Calu3 (cell line): ENCODE measurements at regions of chr12 and their contacts with region 1.

Region 1: DNA sequence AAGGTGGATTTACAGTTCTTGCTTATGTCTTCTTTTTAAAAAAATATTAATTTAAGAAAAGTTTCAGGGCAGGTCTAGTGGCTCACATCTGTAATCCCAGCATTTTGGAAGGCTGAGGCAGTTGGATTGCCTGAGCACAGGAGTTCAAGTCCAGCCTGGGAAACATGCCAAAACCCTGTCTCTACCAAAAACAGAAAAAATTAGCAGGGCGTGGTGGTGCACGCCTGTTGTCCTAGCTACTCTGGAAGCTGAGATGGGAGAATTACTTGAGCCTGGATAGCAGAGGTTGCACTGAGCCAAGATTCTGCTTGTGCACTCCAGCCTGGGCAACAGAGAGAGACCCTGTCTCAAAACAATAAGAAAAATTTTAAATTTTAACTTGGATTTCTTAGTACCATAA is 5.4 kb upstream of the TAS2R46 start:
- DNase-seq: no peak
- H3K4me3 Mint-ChIP-seq: no peak overlapping the region
- H3K27ac Mint-ChIP-seq: no peak overlapping the region
- H3K4me1 Mint-ChIP-seq: no peaks in the 10 kb centered on the region
- H3K27me3 Mint-ChIP-seq: no peaks in the 10 kb centered on the region
- CTCF ChIP-seq: no peak

Region 2: GRCh38 chr12:11015775-11016430 is 51.6 kb before region 1 on chr12:
- CTCF ChIA-PET with region 1: interaction called, 4 read pairs
- intact Hi-C with region 1: loop called (anchors 1 kb)
- DNase-seq: peak; percentile 7
- H3K4me3 Mint-ChIP-seq: no peak overlapping the region
- H3K27ac Mint-ChIP-seq: peak overlapping the region; percentile 11
- H3K4me1 Mint-ChIP-seq: peaks cover 15% of the 10 kb centered on the region
- H3K27me3 Mint-ChIP-seq: no peaks in the 10 kb centered on the region
- CTCF ChIP-seq: no peak

Region 3: DNA sequence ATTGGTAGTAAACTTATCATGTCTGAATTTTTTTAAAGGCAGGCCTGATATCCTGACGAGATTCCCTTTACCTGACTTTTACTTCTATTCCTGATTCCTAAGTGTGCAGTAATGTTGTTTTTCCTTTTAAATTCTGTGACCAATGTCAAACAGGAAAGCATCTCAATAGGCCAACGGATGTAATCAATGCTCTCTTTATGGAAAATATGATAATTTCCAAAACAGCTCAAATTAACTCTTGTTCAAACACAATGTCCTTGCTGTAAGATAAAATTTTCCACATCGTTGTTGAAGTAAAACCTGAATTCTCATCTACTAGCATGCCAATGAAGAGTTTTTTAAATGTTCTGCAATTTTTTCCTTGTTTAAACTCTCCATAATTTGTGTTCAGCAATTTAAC is 28.3 kb before region 1 on chr12:
- CTCF ChIA-PET with region 1: no interaction called
- intact Hi-C with region 1: loop called (anchors 1 kb)
- DNase-seq: no peak
- H3K4me3 Mint-ChIP-seq: no peak overlapping the region
- H3K27ac Mint-ChIP-seq: no peak overlapping the region
- H3K4me1 Mint-ChIP-seq: no peaks in the 10 kb centered on the region
- H3K27me3 Mint-ChIP-seq: no peaks in the 10 kb centered on the region
- CTCF ChIP-seq: no peak

Region 4: DNA sequence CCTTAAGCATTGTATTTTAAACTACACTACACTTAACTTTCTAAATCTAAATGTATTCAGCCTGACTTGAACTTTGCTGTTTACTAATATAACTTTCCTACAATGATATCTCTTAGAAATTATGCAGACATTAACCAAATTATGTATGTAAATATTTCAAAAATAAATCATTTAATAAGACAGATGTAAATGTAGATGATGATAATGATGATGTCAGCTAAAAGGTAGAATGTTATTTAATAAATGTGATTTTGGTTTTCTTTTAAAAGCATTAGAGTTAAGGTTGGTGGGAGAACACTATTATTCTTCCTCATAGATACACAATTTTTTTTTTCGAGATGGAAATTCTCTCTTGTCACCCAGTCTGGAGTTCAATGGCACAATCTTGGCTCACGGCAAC is 14.5 kb after region 1 on chr12:
- CTCF ChIA-PET with region 1: no interaction called
- intact Hi-C with region 1: no loop called
- DNase-seq: no peak
- H3K4me3 Mint-ChIP-seq: no peak overlapping the region
- H3K27ac Mint-ChIP-seq: no peak overlapping the region
- H3K4me1 Mint-ChIP-seq: no peaks in the 10 kb centered on the region
- H3K27me3 Mint-ChIP-seq: no peaks in the 10 kb centered on the region
- CTCF ChIP-seq: no peak